Heart right ventricle (tissue), 16 donors: ENCODE measurements at regions of chr4 and their contacts with region 1.

Region 1: DNA sequence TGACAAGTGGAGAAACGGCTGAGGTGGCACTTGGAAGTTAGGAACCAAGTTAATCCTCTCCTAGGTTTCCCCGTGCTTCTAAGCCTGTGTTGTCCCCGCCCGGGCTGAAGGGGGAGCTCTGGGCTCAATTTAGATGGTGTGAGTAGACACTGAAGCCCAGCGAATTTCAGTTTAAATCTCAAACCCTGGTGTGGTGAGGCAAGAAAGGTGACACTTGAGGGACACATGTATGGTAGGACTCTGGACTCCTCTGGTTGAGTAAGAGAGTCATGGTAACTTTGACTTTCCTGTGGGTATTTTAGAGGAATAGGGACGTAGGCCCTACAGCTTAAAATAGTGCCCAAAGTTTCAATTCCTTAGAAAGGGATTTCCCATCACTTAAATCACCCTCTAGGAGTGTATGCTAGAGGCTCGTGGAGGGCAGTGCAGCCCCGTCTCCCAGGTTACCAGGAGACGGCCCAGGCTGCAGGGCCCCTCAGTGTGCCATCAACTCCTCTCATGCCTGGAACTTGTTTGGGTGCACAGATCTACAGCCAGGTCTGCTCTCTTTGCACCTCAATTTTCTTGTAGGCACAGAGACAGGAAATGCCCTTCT is 24.0 kb downstream of the HAND2 start:
- DNase-seq: peak; percentile 66
- ATAC-seq: peak; percentile 51 to 78 (median 66)
- H3K4me3 ChIP-seq: peak overlapping the region in 9 of 10 donors; percentile 15 to 60 (median 46)
- H3K27ac ChIP-seq: peak overlapping the region in 9 of 10 donors; percentile 77 to 94 (median 91)
- H3K4me1 ChIP-seq: peaks cover 0 to 56% (median 12%) of the 10 kb centered on the region in 9 donors
- H3K27me3 ChIP-seq: peaks cover 0 to 99% (median 43%) of the 10 kb centered on the region in 7 donors
- CTCF ChIP-seq: peak; percentile 53 to 87 (median 77)

Region 2: DNA sequence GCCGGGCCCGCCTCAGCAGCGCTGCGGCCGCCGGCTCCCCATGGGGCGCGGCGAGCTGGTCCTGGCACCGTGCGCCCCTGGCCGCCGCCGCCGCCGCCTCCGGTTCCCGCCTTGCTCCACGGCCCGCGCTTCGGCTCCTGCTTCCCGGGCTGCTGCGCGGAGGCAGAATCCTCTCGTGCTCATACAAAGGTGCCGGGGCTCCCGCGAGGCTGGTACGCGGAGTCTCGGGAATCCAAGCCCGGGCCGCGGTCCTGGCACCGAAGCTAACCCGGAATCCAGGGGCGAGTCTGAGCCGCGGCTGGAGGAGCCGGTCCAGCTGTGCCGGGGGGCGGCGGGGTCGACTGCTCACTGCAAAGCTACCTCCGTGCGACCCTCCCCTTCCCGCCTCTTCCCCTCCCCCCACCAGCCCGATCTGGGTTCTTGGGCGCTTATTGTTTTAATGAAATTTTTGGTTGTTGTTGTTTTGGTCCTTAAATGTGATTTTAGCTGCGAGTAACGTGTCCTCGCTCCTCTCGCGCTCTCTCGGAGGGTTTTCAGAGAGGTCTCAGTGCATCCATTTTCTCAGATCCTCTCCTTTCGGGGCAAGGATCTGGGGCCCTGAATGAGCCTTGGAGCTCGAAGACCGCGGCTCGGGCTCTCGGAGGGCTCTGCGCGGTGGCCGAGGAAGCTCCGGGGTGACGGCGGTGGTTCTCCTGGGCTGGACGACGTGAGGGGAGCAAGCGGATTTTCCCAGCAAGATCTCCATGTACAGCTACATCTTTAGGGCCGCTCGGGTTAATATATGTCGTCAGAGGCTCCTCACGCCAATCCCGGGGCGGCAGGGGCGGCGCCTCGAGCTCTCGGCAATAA is 23.7 kb after region 1 on chr4 and contains the start of gene HAND2:
- intact Hi-C with region 1: loop called in 1 of 10 experiments (anchors 2 kb)
- DNase-seq: peak; percentile 81 to 87
- ATAC-seq: peak; percentile 67 to 80 (median 75)
- H3K4me3 ChIP-seq: peak within 1 kb of the TSS; percentile 56 to 90 (median 74)
- H3K27ac ChIP-seq: peak within 1 kb of the TSS; percentile 89 to 97 (median 96)
- H3K4me1 ChIP-seq: peaks cover 0 to 20% (median 6%) of the 10 kb centered on the region in 9 donors
- H3K27me3 ChIP-seq: peaks cover 0 to 98% (median 50%) of the 10 kb centered on the region in 7 donors
- CTCF ChIP-seq: no peak
- total RNA-seq, gene HAND2: 64.6 to 196 (median 130) TPM

Region 3: DNA sequence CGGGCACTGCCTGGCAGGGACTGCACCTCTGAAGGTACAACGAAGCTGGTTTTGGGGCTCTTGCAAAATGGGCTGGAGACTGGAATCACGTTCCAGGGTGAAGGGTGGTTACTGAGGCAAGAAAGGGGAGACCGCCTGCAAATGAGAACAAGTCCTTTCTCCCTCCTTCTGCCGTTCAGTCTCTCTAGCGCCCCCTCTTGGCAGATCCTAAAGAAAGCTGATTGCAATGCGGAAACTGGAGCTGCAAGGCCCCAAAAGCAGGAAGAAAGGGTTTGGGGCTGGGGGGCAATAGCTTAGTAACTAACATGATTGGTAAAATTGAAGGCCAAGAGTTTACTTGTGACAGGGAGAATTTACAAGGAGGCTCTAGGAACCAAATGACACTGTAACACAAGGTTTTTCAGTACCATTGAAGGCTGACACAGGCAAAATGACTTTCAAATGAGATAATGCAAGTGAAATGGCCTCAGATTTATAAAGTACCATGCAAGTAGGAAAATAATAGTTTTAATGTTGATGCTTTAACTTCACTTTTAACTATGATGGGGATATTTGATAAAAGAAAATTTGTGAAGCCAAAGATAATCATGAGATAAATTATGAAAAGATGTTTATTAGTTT is 246.7 kb after region 1 on chr4:
- intact Hi-C with region 1: loop called in 9 of 10 experiments (anchors 1 to 5 kb)
- DNase-seq: no peak
- ATAC-seq: no peak
- H3K4me3 ChIP-seq: no peak overlapping the region
- H3K27ac ChIP-seq: no peak overlapping the region
- H3K4me1 ChIP-seq: peaks cover 0 to 5% (median 0%) of the 10 kb centered on the region in 9 donors
- H3K27me3 ChIP-seq: no peaks in the 10 kb centered on the region
- CTCF ChIP-seq: peak in 8 of 9 donors; percentile 9 to 52 (median 46)

Region 4: GRCh38 chr4:173990126-173990868 is 484.3 kb after region 1 on chr4:
- intact Hi-C with region 1: loop called in 7 of 10 experiments (anchors 2 to 10 kb)
- DNase-seq: peak in 1 of 2 donors; percentile 11
- ATAC-seq: peak; percentile 56 to 92 (median 76)
- H3K4me3 ChIP-seq: peak overlapping the region in 8 of 10 donors; percentile 3 to 27 (median 12)
- H3K27ac ChIP-seq: peak overlapping the region; percentile 4 to 73 (median 54)
- H3K4me1 ChIP-seq: peaks cover 0 to 20% (median 3%) of the 10 kb centered on the region in 9 donors
- H3K27me3 ChIP-seq: no peaks in the 10 kb centered on the region
- CTCF ChIP-seq: peak in 8 of 9 donors; percentile 32 to 69 (median 56)

Region 5: GRCh38 chr4:174156239-174156826 is 650.3 kb after region 1 on chr4:
- intact Hi-C with region 1: loop called in 6 of 10 experiments (anchors 2 to 10 kb)
- DNase-seq: peak in 1 of 2 donors; percentile 12
- ATAC-seq: peak; percentile 73 to 85 (median 82)
- H3K4me3 ChIP-seq: peak overlapping the region in 2 of 10 donors; percentile 14
- H3K27ac ChIP-seq: peak overlapping the region in 2 of 10 donors; percentile 28 to 37
- H3K4me1 ChIP-seq: peaks cover 0 to 18% (median 7%) of the 10 kb centered on the region in 9 donors
- H3K27me3 ChIP-seq: no peaks in the 10 kb centered on the region
- CTCF ChIP-seq: peak; percentile 37 to 77 (median 67)